ENCODE measurements at regions of chr6 and their contacts with region 1.

Region 1: DNA sequence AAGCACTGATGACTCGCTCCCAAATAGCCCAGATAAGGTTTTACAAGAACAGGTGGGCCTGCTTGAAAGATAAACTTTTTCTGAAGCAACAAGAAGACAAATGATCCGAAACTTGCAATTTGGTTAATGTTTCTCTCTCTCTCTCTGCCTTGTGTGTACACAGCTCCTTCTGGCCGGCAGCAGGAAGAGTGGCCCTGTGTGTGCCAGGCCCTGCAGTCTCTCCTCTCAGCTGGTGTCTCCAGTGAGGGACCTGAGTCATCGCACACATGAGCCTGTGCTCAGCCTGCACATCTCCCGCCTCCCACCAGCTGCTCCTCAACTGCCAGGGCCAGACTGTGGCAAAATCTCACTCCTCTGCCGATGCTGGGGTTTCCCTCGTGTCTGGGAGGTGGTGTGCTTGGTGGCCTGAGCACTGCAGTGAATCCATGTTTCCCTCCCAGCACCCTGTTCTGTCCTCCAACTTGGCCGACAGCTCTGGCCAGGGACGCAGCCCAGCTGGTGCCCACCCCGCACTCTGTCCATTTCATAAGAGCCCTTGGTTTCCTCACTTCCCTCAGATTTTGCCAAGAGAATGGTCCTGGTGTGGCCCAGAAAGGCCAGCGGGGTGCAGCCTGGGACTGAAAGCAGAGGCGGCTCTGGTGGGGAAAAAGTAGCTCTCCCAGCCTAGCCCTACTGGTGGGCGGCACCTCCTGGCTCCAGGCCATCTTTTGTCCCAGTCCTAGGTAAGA is 49.4 kb downstream of the ERMARD start:
- DNase-seq: peak; percentile 91
- ATAC-seq: peak; percentile 88
- H3K4me3 ChIP-seq: peak overlapping the region; percentile 41 to 74 (median 51)
- H3K27ac ChIP-seq: peak overlapping the region; percentile 82
- H3K4me1 ChIP-seq: peaks cover 80% of the 10 kb centered on the region
- H3K27me3 ChIP-seq: no peaks in the 10 kb centered on the region
- CTCF ChIP-seq: 0 out of 2 replicates have a peak, but pooled peaks have one; percentile 11
- EP300 ChIP-seq: peak; percentile 72 to 91
- POLR2A ChIP-seq: peak; percentile 55 to 72
- RAD21 ChIP-seq: no peak; the same call in 1 of the 2 replicates

Region 2: GRCh38 chr6:169292338-169293124 is 508.3 kb before region 1 on chr6:
- CTCF ChIA-PET with region 1: no interaction called
- POLR2A ChIA-PET with region 1: no interaction called
- in situ Hi-C with region 1: no loop called
- intact Hi-C with region 1: loop called (anchors 2 kb)
- DNase-seq: peak; percentile 99
- ATAC-seq: peak; percentile 82
- H3K4me3 ChIP-seq: peak overlapping the region; percentile 20 to 62 (median 27); a peak in 5 of 6 replicates
- H3K27ac ChIP-seq: peak overlapping the region; percentile 83
- H3K4me1 ChIP-seq: peaks cover 67% of the 10 kb centered on the region
- H3K27me3 ChIP-seq: no peaks in the 10 kb centered on the region
- CTCF ChIP-seq: peak; percentile 16; the same call in 1 of the 2 replicates
- EP300 ChIP-seq: peak; percentile 89 to 95
- POLR2A ChIP-seq: peak in 1 of 2 experiments; percentile 28; a peak in 1 of 4 replicates
- RAD21 ChIP-seq: peak; percentile 30; the same call in 1 of the 2 replicates

Region 3: DNA sequence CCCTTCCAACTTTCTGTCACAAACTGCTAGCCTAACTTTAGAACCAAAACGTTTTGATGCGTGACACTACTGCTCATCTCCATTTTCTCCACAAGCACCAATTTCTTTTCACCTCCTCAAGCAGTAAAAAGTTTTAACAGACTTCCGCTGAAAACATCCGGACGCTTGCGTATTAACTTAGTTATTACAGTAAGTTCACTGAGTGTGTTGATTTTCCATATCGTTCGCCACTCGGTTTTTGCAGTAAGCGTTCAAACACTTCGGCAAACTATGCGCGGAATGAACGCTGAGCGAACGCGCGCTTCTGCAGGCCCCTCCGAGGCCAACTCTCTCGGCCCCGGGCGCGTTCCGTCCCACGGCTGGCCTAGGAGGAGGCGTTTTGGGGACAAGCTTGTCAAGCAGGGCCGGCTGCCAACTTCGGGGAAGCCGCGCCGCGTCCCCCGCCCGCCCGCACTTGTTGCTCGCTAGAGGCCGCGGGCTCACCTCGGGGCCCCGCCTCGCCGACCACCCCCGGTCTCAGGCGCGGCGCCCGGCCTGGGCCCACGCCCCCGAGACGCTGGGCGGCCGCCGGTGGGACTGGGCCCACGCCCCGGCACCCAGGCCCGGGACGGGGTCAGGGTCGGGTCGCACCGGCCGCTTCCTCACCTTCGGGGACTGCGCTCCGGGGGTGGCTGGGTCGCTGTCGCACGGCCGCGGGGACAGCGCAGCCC is 77.5 kb before region 1 on chr6:
- CTCF ChIA-PET with region 1: no interaction called
- POLR2A ChIA-PET with region 1: interaction called, 41 read pairs
- in situ Hi-C with region 1: no loop called
- intact Hi-C with region 1: loop called (anchors 2 kb)
- DNase-seq: peak; percentile 39
- ATAC-seq: peak; percentile 20
- H3K4me3 ChIP-seq: peak overlapping the region; percentile 82 to 93 (median 90)
- H3K27ac ChIP-seq: peak overlapping the region; percentile 72
- H3K4me1 ChIP-seq: peaks cover 60% of the 10 kb centered on the region
- H3K27me3 ChIP-seq: no peaks in the 10 kb centered on the region; a peak in 1 of 5 replicates
- CTCF ChIP-seq: 0 out of 2 replicates have a peak, but pooled peaks have one; percentile 10
- EP300 ChIP-seq: no peak
- POLR2A ChIP-seq: no peak
- RAD21 ChIP-seq: peak; percentile 28; the same call in 1 of the 2 replicates

Region 4: DNA sequence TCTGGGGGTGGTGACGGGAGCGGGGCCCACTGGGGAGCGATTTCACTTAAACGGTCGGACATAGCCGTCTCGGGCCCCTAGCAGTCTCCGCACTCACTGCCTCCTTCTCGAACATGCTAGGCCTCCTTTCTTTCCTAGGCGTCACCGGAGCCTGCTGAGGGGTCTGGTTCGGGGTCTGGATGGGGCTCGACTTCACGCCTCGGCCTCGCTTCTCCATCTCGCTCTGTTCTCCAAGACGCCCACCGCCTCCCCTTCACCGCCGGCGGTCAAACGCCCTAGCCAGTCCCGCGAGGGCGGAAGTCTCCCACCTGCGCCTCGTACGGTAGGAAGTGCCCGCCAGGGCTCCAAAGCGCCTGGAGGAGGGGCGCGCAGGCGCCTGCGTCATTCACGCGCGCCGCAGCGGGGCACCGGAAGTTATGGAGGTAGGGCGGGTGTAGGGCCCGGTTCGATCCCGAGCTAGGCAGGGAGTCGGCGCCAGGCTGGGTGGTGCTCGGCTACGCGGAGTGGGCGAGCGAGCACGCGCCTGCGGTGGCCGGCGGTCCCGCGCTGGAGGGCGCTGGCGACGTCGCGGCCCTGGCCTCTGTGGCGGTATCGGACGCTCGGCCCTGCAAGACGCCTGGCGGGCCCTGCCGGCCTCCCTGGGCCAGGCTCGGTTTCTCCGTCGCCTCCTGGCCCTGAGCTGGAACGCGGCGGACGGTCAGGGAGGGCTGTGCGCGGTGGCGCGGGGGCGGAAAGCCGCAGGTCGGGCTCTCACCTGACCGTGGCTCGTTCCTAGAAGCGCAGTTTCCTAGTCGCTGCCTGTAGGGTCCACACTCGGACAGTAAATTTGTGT is 49.4 kb before region 1 on chr6 and contains the starts of genes DYNLT2 and ERMARD:
- CTCF ChIA-PET with region 1: no interaction called
- POLR2A ChIA-PET with region 1: interaction called, 12 read pairs
- in situ Hi-C with region 1: no loop called
- intact Hi-C with region 1: loop called (anchors 2 kb)
- DNase-seq: peak; percentile 96
- ATAC-seq: peak; percentile 95
- H3K4me3 ChIP-seq: peak within 1 kb of the TSS; percentile 88 to 91 (median 90)
- H3K27ac ChIP-seq: peak within 1 kb of the TSS; percentile 96
- H3K4me1 ChIP-seq: peaks cover 48% of the 10 kb centered on the region
- H3K27me3 ChIP-seq: no peaks in the 10 kb centered on the region; a peak in 1 of 5 replicates
- CTCF ChIP-seq: peak; percentile 52
- EP300 ChIP-seq: peak in 1 of 2 experiments; percentile 68; a peak in 3 of 4 replicates
- POLR2A ChIP-seq: peak; percentile 90 to 99
- RAD21 ChIP-seq: peak; percentile 88
- total RNA-seq, gene DYNLT2: 3.1 and 4.3 TPM in 2 replicates
- total RNA-seq, gene ERMARD: 8.4 and 10.7 TPM in 2 replicates

Region 5: GRCh38 chr6:169883316-169883715 is 82.5 kb after region 1 on chr6:
- CTCF ChIA-PET with region 1: no interaction called
- POLR2A ChIA-PET with region 1: no interaction called
- in situ Hi-C with region 1: no loop called
- intact Hi-C with region 1: loop called (anchors 2 kb)
- DNase-seq: peak; percentile 20
- ATAC-seq: peak; percentile 68
- H3K4me3 ChIP-seq: no peak overlapping the region
- H3K27ac ChIP-seq: no peak overlapping the region
- H3K4me1 ChIP-seq: no peaks in the 10 kb centered on the region
- H3K27me3 ChIP-seq: peaks cover 2 to 60% of the 10 kb centered on the region in 2 experiments; a peak in 4 of 5 replicates
- CTCF ChIP-seq: peak; percentile 69
- EP300 ChIP-seq: no peak
- POLR2A ChIP-seq: no peak
- RAD21 ChIP-seq: no peak